Activated naive CD4-positive, alpha-beta T cell treated with anti-CD3 and anti-CD28 coated beads for 36 hours (primary cell): ENCODE measurements at regions of chr19 and their contacts with region 1.

Region 1: DNA sequence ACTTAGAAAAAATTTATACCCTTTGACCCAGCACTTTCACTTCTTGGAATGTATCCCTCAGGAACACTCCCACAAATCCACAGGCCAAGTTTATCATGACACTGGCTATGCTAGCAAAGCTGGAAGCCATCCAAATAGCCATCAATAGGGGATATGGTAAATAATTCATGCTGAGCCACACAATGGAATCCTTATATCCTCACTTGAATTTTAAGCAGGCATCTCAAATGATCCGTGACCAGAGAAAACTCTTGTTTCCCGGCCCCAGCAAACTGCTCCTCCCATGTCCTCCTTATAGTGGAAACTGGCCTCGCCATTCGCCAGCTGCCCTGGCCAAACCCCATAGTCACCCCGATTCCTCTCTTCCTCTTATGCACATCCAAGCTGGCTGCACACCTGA is 37.6 kb downstream of the GRIK5 start:
- DNase-seq: no peak
- H3K4me3 Mint-ChIP-seq: no peak overlapping the region
- H3K27ac Mint-ChIP-seq: no peak overlapping the region
- H3K4me1 Mint-ChIP-seq: no peaks in the 10 kb centered on the region
- H3K27me3 Mint-ChIP-seq: no peaks in the 10 kb centered on the region

Region 2: DNA sequence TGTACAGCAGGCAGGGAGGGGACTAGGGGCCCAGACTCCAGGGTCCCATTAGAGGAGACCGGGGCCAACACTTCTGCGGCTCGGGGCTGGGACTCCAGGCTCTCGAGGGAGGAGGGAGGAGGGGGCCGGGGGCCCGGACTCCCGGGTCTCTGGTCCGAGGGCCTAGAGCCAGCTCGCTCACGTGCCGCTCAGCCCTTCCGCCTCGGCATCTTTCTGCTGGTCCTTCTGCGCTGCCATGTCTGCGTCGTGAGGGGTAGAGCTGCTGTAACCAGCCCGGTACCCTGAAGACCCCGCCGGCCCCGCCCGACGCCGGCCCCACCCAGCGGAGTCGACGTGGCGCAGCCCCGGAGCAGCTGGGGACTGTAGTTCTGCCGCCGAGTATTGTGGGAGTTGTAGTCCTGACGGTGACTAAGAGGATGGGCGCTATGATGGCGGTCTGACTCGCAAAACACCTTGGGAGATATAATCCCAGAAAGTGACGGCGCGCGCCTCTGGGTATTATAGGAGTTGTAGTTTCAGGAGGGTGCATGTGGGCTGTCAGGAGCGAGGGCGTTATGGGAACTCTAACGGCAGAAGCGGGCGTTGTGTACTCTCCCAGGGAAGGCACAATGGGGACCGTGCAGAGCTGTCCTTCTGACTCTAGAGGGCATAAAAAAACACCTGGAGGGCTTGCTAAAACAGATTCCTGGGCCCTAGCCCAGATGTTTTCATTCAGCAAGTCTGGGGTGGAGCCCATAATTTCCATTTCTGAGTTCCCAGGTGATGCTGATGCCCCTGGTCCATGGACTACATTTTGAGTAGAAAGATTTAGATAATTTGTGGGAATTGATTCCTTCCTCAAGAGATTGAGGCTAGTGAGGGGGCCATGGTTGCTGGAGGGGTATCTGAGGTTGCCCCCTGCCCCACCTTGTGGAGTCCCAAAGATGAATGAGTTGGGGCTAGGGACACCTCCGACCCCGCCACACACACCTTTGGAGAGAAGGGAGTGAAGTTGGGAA is 73.1 kb before region 1 on chr19 and contains the start of gene RABAC1:
- CTCF ChIA-PET with region 1: interaction called, 3 read pairs
- intact Hi-C with region 1: loop called (anchors 1 kb)
- DNase-seq: peak; percentile 95
- H3K4me3 Mint-ChIP-seq: peak within 1 kb of the TSS; percentile 95
- H3K27ac Mint-ChIP-seq: peak within 1 kb of the TSS; percentile 81
- H3K4me1 Mint-ChIP-seq: peaks cover 13% of the 10 kb centered on the region
- H3K27me3 Mint-ChIP-seq: no peaks in the 10 kb centered on the region
- total RNA-seq, gene RABAC1: 32.8 TPM

Region 3: GRCh38 chr19:41998246-41999020 is 34.0 kb before region 1 on chr19:
- CTCF ChIA-PET with region 1: interaction called, 6 read pairs
- intact Hi-C with region 1: loop called (anchors 5 kb)
- DNase-seq: peak; percentile 59
- H3K4me3 Mint-ChIP-seq: no peak overlapping the region
- H3K27ac Mint-ChIP-seq: no peak overlapping the region
- H3K4me1 Mint-ChIP-seq: peaks cover 24% of the 10 kb centered on the region
- H3K27me3 Mint-ChIP-seq: peaks cover 65% of the 10 kb centered on the region

Region 4: GRCh38 chr19:42045575-42045974 is 13.1 kb after region 1 on chr19:
- CTCF ChIA-PET with region 1: interaction called, 14 read pairs
- intact Hi-C with region 1: no loop called
- DNase-seq: no peak
- H3K4me3 Mint-ChIP-seq: no peak overlapping the region
- H3K27ac Mint-ChIP-seq: no peak overlapping the region
- H3K4me1 Mint-ChIP-seq: peaks cover 8% of the 10 kb centered on the region
- H3K27me3 Mint-ChIP-seq: no peaks in the 10 kb centered on the region

Region 5: GRCh38 chr19:42290523-42291438 is 258.4 kb after region 1 on chr19:
- CTCF ChIA-PET with region 1: no interaction called
- intact Hi-C with region 1: no loop called
- DNase-seq: peak; percentile 40
- H3K4me3 Mint-ChIP-seq: no peak overlapping the region
- H3K27ac Mint-ChIP-seq: peak overlapping the region; percentile 65
- H3K4me1 Mint-ChIP-seq: peaks cover 9% of the 10 kb centered on the region
- H3K27me3 Mint-ChIP-seq: no peaks in the 10 kb centered on the region